Ovary (tissue), 10 donors: ENCODE measurements at regions of chr2 and their contacts with region 1.

Region 1: DNA sequence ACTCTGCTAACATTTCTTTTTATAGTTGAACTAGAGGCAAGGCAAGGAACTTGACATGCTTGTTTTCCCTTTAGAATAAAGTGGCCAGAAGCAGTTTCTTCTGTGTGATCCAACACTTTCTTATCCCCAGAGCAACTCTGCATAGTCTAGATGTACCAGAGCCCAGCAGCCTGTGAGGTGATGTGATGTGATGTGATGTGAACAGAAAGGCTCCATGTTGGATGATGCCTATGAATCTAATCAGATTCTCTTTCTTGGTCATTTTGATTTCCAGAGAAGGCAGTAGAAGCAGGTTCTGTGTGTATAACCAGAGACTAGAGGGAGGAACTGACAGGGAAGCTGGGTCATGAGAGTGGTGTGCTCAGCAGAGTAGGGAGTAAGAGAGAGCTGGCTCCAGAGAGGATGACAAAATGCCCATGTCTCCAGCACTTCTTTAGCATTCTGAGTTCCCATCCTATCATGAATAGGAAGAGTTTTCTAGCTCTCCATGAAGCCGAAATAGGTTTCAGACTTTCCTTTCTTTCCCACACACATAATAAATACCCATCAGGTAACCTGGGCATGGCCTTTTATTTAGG is 31.0 kb upstream of the PTH2R start:
- DNase-seq: no peak
- H3K4me3 ChIP-seq: no peak overlapping the region
- H3K27ac ChIP-seq: no peak overlapping the region
- H3K4me1 ChIP-seq: no peaks in the 10 kb centered on the region
- H3K27me3 ChIP-seq: no peaks in the 10 kb centered on the region
- CTCF ChIP-seq: no peak
- EP300 ChIP-seq: no peak
- POLR2A ChIP-seq: no peak

Region 2: GRCh38 chr2:208392300-208393080 is 16.9 kb after region 1 on chr2:
- intact Hi-C with region 1: loop called in 1 of 4 experiments (anchors 2 kb)
- DNase-seq: no peak
- H3K4me3 ChIP-seq: no peak overlapping the region
- H3K27ac ChIP-seq: no peak overlapping the region
- H3K4me1 ChIP-seq: no peaks in the 10 kb centered on the region
- H3K27me3 ChIP-seq: no peaks in the 10 kb centered on the region
- CTCF ChIP-seq: no peak
- EP300 ChIP-seq: no peak
- POLR2A ChIP-seq: no peak